ENCODE measurements at regions of chr3 and their contacts with region 1.

Region 1: GRCh38 chr3:157532529-157533297 is 29.5 kb upstream of the VEPH1 start:
- H3K4me3 ChIP-seq: no peak overlapping the region
- H3K27ac ChIP-seq: no peak overlapping the region
- H3K4me1 ChIP-seq: no peaks in the 10 kb centered on the region
- CTCF ChIP-seq: peak; percentile 55; the same call in 1 of the 2 replicates

Region 2: DNA sequence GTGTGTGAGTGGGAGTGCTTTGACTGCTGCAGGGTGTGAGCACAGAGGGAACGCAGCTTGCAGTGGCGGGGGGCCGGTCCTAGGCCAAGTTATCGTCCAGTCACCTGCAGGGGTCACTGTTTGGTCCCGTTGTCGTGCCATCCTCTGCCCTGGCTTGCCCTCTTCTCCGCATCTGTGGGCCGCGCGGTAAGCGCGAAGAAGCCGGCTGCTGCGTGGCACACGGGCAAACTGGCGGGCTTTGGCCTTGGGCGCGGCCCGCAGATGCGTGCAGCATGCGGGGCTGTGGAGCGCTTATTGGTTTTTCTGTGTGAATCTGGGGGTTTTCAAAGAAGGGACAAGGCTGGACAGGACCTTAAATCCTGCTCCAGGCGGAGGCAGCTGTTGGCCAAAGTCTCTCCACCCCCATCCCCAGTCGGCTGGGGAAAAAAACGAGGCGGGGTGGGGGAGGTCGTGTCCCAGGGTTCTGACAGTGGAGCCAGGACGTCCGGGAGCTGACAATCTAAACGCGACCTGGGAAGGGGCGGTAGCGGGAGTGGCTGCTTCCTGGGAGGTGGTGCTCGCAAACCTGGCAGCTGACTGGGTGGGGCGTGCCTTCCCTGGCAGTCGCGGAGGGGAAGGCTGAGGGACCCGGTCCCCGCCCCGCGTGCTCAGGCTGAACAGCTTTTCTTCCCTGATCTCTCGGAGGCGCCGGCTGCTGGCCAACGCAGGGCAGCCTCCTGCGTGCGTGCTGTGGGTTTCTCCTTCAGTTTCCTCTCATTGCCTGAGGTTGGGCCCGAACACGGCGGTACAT is 10.2 kb after region 1 on chr3:
- CTCF ChIA-PET with region 1: interaction called, 23 read pairs
- POLR2A ChIA-PET with region 1: interaction called, 3 read pairs
- H3K4me3 ChIP-seq: peak overlapping the region; percentile 24
- H3K27ac ChIP-seq: no peak overlapping the region
- H3K4me1 ChIP-seq: no peaks in the 10 kb centered on the region
- CTCF ChIP-seq: no peak